Vagina (tissue), 2 donors: ENCODE measurements at regions of chr15 and their contacts with region 1.

Region 1: GRCh38 chr15:78077058-78077877 is at the start of gene TBC1D2B:
- DNase-seq: no peak
- H3K4me3 ChIP-seq: peak within 1 kb of the TSS; percentile 93 to 96
- H3K27ac ChIP-seq: peak within 1 kb of the TSS; percentile 95
- H3K4me1 ChIP-seq: peaks cover 43% of the 10 kb centered on the region
- H3K27me3 ChIP-seq: no peaks in the 10 kb centered on the region
- CTCF ChIP-seq: no peak
- POLR2A ChIP-seq: peak in 1 of 2 donors; percentile 42
- total RNA-seq, gene TBC1D2B: 63.6 TPM

Region 2: DNA sequence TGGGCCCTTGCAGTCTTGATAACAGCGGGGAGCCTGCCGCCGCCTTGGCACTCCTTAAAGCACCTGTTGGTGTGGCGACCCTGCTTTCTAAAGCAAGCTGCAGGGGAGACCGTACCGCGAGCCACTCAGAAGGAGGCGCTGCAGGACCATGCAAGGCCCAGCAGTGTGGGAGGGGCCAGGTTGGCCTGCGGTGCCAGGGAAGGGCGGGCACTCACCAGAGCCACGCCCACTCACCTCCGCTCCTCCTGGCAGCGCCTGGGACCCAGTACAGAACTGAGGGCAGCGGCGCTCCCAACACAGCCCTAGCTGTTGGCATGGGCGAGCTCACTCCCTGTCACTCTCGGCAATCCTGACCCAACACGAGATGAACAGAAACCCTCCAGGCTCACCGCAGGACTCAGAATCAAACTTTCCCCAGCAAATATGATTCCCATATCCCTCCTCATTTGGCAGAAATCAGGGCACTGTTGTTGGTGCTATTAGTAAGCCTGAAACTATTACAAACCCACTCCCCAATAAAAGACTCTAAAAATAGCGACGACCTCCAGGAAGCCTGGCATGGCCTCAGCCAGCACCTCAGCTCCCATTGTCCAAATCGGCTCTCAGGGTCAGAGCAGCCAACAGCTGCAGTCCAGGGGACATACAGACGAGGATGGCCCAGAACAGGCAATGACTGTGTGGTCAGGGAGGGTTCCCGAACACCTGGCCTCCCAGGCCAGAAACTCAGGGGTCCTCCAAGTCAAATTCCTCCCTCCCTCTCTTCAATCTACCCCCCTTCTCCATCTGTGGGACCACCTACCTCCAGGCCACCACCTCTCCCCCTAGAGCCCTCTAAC is 77.0 kb before region 1 on chr15:
- intact Hi-C with region 1: loop called (anchors 10 kb)
- DNase-seq: no peak
- H3K4me3 ChIP-seq: no peak overlapping the region
- H3K27ac ChIP-seq: no peak overlapping the region
- H3K4me1 ChIP-seq: peaks cover 38% of the 10 kb centered on the region
- H3K27me3 ChIP-seq: no peaks in the 10 kb centered on the region
- CTCF ChIP-seq: peak in 2 of 3 experiments; percentile 44 to 53
- POLR2A ChIP-seq: no peak